Mammary epithelial cell (primary cell): ENCODE measurements at regions of chr1 and their contacts with region 1.

Region 1: GRCh38 chr1:208455821-208456220 is 211.6 kb upstream of the PLXNA2 start:
- DNase-seq: peak; percentile 30
- H3K4me3 ChIP-seq: no peak overlapping the region
- H3K27ac ChIP-seq: no peak overlapping the region
- H3K4me1 ChIP-seq: peaks cover 2% of the 10 kb centered on the region
- H3K27me3 ChIP-seq: no peaks in the 10 kb centered on the region
- CTCF ChIP-seq: no peak

Region 2: GRCh38 chr1:208445758-208446203 is 10.0 kb before region 1 on chr1:
- CTCF ChIA-PET with region 1: interaction called, 11 read pairs
- dilution Hi-C with region 1: no loop called
- in situ Hi-C with region 1: no loop called
- intact Hi-C with region 1: no loop called
- DNase-seq: peak; percentile 19
- H3K4me3 ChIP-seq: no peak overlapping the region
- H3K27ac ChIP-seq: no peak overlapping the region
- H3K4me1 ChIP-seq: peaks cover 7% of the 10 kb centered on the region
- H3K27me3 ChIP-seq: no peaks in the 10 kb centered on the region
- CTCF ChIP-seq: no peak